Prostate gland (tissue), 2 donors: ENCODE measurements at regions of chr1 and their contacts with region 1.

Region 1: DNA sequence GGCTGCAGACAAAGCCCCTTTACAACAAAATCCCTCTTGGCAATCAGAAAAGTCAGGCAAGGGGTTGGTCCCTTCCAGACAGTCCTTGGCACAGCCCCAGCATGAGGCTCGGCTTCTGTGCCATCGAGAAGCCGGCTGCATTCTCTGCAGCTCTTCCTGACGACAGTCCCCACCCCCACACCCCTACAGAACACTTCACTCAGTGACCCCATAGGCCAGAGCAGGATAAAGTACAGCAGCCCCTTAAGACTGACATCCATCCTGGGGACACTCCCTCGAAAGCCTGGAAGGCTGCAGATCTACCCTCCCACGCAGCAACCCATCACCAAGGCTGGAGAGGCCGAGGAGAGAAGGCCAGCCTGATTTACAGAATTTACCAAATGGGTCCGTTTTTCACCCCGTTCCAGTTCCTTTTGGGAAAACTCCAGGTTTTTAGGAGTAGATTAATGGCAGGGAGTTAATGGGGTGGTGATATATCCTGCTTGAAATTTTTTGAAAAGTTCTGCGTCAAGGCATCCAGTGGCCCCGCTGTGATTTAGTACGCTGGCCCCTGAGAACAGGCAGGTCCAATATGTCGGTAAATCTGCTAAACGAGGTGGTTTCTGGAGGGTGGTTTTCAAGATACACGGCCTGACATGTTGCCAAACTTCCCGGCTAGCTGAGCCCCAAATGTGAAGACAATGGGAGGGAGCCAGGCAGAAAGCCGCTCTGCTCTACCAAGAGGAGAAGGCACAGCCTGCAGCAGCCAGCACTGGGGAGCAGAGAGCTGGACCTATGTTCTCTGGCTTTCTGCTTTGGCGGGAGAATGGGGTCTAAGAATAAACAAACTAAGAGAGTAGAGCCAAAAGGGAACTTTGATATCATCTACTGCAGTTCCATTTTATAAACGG is 81.7 kb downstream of the SSBP3 start:
- DNase-seq: no peak
- H3K4me3 ChIP-seq: no peak overlapping the region
- H3K27ac ChIP-seq: peak overlapping the region; percentile 56 to 59
- H3K4me1 ChIP-seq: peaks cover 18% of the 10 kb centered on the region
- H3K27me3 ChIP-seq: no peaks in the 10 kb centered on the region
- CTCF ChIP-seq: no peak
- POLR2A ChIP-seq: no peak

Region 2: DNA sequence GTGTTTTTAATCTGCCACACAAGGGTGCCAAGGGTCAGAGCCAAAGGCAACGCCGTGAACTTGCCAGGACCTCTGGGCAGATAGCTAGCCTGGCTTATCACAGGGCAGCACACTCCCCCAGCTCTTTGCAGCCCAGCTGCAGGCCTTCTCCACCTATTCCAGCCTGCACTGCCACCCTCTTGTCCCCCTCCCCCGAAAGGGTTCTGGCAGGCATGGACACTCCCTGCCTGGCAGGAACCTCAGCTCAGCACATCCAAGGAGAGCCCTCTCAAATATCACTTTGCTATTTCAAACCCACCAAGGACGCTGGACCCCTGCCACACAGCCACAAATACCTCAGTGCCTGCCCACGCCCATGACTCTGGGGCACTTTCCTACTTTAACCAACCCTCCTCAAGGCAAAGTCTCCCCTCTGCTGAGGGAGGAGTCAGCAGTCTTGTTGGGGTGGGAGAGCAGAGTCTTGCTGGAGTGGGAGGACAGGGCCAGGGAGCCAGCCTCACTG is 72.6 kb after region 1 on chr1:
- intact Hi-C with region 1: loop called (anchors 5 kb)
- DNase-seq: no peak
- H3K4me3 ChIP-seq: no peak overlapping the region
- H3K27ac ChIP-seq: no peak overlapping the region
- H3K4me1 ChIP-seq: peaks cover 4% of the 10 kb centered on the region
- H3K27me3 ChIP-seq: no peaks in the 10 kb centered on the region
- CTCF ChIP-seq: no peak
- POLR2A ChIP-seq: no peak